A549 (cell line): ENCODE measurements at regions of chr2 and their contacts with region 1.

Region 1: GRCh38 chr2:36461039-36461681 is 105.6 kb downstream of the CRIM1 start:
- DNase-seq: peak; percentile 28 to 82
- ATAC-seq: peak; percentile 72
- H3K4me3 ChIP-seq: no peak overlapping the region; the same call in 2 of the 3 replicates
- H3K27ac ChIP-seq: peak overlapping the region; percentile 80 to 87
- H3K4me1 ChIP-seq: peaks cover 91% of the 10 kb centered on the region
- CTCF ChIP-seq: no peak
- EP300 ChIP-seq: peak; percentile 45 to 76; a peak in 3 of 5 replicates
- POLR2A ChIP-seq: no peak
- RAD21 ChIP-seq: peak in 1 of 2 experiments; percentile 32; a peak in 1 of 5 replicates

Region 2: DNA sequence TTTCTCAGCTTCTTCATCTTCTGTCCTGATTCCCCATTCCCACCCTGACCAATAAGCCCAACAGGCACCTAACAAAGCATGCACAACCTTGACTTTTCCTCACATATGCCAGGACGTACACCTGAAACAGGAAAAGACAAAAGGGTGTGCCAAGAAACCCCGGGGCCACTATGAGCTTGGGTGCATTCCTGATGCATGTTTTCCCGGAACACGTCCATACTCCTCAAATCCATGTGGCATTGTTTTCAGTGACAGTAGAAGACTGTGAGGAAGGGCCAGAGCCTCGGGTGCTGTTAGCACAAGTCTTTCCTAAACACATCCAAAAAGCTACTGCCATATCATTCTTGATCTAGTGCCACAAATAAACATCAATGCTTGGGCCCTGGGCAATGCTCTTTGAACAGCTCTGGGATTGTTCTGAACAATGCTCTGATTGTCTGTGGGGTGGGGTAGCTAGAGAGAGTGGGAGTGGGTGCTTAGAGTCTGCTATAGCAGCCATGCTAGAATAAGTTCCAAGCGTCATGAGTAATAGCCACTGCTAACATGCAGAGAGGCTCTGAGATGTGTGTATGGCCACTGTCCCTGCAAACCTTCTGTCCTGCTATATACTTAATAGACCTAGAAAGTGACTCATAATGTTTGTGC is 287.3 kb before region 1 on chr2:
- CTCF ChIA-PET with region 1: no interaction called
- POLR2A ChIA-PET with region 1: no interaction called
- DNase-seq: no peak
- ATAC-seq: no peak
- H3K4me3 ChIP-seq: no peak overlapping the region
- H3K27ac ChIP-seq: no peak overlapping the region
- H3K4me1 ChIP-seq: no peaks in the 10 kb centered on the region
- CTCF ChIP-seq: no peak
- EP300 ChIP-seq: no peak
- POLR2A ChIP-seq: no peak
- RAD21 ChIP-seq: no peak

Region 3: GRCh38 chr2:36235426-36235825 is 225.7 kb before region 1 on chr2:
- CTCF ChIA-PET with region 1: no interaction called
- POLR2A ChIA-PET with region 1: no interaction called
- DNase-seq: no peak
- ATAC-seq: no peak
- H3K4me3 ChIP-seq: no peak overlapping the region
- H3K27ac ChIP-seq: no peak overlapping the region
- H3K4me1 ChIP-seq: no peaks in the 10 kb centered on the region
- CTCF ChIP-seq: no peak
- EP300 ChIP-seq: no peak
- POLR2A ChIP-seq: no peak
- RAD21 ChIP-seq: no peak

Region 4: GRCh38 chr2:36355151-36355889 is 105.8 kb before region 1 on chr2 and contains the start of gene CRIM1:
- CTCF ChIA-PET with region 1: interaction called, 148 read pairs
- POLR2A ChIA-PET with region 1: interaction called, 23 read pairs
- DNase-seq: peak; percentile 70 to 92
- ATAC-seq: peak; percentile 55 to 68
- H3K4me3 ChIP-seq: peak within 1 kb of the TSS; percentile 90
- H3K27ac ChIP-seq: peak within 1 kb of the TSS; percentile 93 to 97
- H3K4me1 ChIP-seq: peaks cover 45% of the 10 kb centered on the region
- CTCF ChIP-seq: no peak
- EP300 ChIP-seq: no peak
- POLR2A ChIP-seq: peak; percentile 95
- RAD21 ChIP-seq: peak in 1 of 2 experiments; percentile 35; a peak in 2 of 5 replicates
- polyA plus RNA-seq, gene CRIM1: 208 and 275 TPM in 2 replicates

Region 5: DNA sequence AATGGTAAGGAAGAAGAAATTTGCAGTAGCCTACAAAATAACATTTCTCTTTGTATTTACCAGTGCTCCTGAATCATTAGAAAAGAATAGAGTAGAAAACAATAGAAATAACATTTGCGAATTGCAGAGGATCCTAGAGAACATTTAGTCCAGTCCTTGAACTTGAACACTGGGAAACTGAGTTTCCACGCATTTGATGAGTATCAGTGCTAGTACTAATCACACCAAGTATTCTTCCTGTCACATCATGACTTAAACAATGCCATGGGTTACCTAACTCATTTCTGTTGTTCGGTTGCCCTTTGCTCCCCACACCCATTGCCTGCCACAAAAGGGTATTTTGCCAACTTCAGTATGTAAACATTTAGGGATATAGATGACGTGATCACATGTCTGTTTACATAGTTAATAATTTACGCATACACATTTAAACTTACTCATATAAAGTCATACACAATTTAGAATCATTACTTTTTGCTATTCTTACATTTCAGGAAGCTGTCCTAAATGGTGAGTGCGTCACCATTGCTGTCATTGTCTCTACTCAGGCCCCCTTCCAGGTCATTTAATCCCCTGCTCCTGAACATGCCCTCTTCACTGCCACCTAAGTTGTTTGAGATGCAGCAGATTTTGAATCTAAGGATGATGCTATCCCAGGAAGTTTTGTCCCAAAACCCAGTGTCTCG is 63.3 kb before region 1 on chr2:
- CTCF ChIA-PET with region 1: interaction called, 19 read pairs
- POLR2A ChIA-PET with region 1: no interaction called
- DNase-seq: peak; percentile 58 to 98
- ATAC-seq: peak; percentile 59 to 72
- H3K4me3 ChIP-seq: peak overlapping the region; percentile 8; the same call in 1 of the 3 replicates
- H3K27ac ChIP-seq: peak overlapping the region; percentile 88 to 92
- H3K4me1 ChIP-seq: peaks cover 98% of the 10 kb centered on the region
- CTCF ChIP-seq: no peak
- EP300 ChIP-seq: peak; percentile 98; a peak in 4 of 5 replicates
- POLR2A ChIP-seq: no peak
- RAD21 ChIP-seq: peak; percentile 35 to 64; a peak in 4 of 5 replicates

Region 6: DNA sequence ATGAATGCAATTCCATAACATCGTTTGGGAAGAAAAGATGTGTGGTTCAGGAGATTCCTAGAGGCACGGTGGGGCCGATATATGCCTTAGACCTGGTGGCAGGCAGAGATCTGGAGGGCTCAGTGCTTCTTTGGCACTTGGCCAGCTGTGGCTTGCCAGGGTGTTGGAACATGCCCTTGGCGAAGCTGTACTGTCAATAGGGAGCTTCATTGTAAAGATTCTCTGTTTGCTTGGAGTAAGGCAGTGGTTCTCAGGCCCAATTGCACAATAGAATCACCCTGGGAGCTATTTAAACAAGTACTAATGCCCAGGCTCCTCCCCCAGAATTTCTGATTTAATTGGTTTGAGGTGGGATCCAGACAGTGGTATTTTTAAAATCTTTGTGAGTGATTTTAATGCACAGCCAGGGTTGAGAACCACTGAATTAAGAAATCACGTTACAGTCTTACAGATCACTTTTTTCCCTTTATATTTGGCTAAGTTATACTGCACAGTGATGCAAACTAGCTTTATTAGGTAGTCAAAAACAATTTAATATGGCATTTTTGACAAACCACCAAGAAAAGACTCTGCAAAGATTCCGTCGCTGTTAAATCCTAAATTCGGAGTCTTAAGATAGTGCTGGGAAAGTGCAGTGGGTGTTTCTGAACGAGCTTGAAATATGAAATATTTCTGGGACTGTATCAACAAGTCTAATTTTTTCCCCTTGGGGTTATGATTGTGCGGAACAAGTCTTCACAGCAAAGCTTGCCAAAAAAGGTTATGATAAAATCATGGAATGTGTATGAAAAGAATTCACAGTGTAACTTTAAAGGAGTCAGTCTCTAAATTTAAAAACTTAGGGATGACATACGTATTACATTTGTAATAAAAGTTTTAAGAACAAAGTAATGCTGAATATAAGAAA is 27.6 kb before region 1 on chr2:
- CTCF ChIA-PET with region 1: interaction called, 36 read pairs
- POLR2A ChIA-PET with region 1: interaction called, 5 read pairs
- DNase-seq: peak in 1 of 2 experiments; percentile 76
- ATAC-seq: peak; percentile 51 to 73; a peak in 5 of 6 replicates
- H3K4me3 ChIP-seq: no peak overlapping the region
- H3K27ac ChIP-seq: peak overlapping the region; percentile 29 to 57; a peak in 5 of 6 replicates
- H3K4me1 ChIP-seq: peaks cover 93% of the 10 kb centered on the region
- CTCF ChIP-seq: no peak
- EP300 ChIP-seq: peak in 1 of 2 experiments; percentile 30; a peak in 2 of 5 replicates
- POLR2A ChIP-seq: no peak
- RAD21 ChIP-seq: no peak

Region 7: DNA sequence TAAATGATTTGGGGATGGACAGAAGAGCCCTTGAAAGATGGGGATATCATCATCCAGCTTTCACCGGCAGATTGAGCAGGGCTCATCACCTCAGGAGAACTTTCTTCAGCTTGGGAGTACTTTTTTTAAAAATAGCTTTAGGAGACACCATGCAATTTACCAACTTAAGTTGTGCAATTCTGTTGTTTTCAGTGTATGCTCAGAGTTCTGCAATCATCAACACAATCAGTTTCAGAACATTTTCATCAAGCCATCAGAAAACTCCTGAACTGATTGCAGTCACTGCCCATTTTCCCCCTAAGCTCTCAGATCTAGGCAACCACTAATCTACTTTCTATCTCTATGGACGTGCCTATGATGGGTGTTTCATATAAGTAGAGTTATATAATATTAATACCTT is 12.1 kb after region 1 on chr2:
- CTCF ChIA-PET with region 1: interaction called, 36 read pairs
- POLR2A ChIA-PET with region 1: no interaction called
- DNase-seq: no peak
- ATAC-seq: no peak
- H3K4me3 ChIP-seq: no peak overlapping the region
- H3K27ac ChIP-seq: no peak overlapping the region
- H3K4me1 ChIP-seq: peaks cover 16% of the 10 kb centered on the region
- CTCF ChIP-seq: no peak
- EP300 ChIP-seq: no peak
- POLR2A ChIP-seq: no peak
- RAD21 ChIP-seq: no peak

Region 8: GRCh38 chr2:36507408-36507812 is 46.2 kb after region 1 on chr2:
- CTCF ChIA-PET with region 1: interaction called, 11 read pairs
- POLR2A ChIA-PET with region 1: no interaction called
- DNase-seq: peak; percentile 60 to 72
- ATAC-seq: peak; percentile 92 to 94
- H3K4me3 ChIP-seq: no peak overlapping the region
- H3K27ac ChIP-seq: peak overlapping the region; percentile 25 to 31; a peak in 3 of 6 replicates
- H3K4me1 ChIP-seq: peaks cover 58% of the 10 kb centered on the region
- CTCF ChIP-seq: peak; percentile 87
- EP300 ChIP-seq: no peak
- POLR2A ChIP-seq: no peak
- RAD21 ChIP-seq: peak; percentile 92 to 97